ENCODE measurements at regions of chr1 and their contacts with region 1.

Region 1: GRCh38 chr1:183567584-183567983 is 22.7 kb downstream of the NCF2 start:
- DNase-seq: no peak
- H3K4me3 Mint-ChIP-seq: no peak overlapping the region
- H3K27ac Mint-ChIP-seq: no peak overlapping the region
- H3K4me1 Mint-ChIP-seq: peaks cover 13% of the 10 kb centered on the region
- H3K27me3 Mint-ChIP-seq: no peaks in the 10 kb centered on the region

Region 2: DNA sequence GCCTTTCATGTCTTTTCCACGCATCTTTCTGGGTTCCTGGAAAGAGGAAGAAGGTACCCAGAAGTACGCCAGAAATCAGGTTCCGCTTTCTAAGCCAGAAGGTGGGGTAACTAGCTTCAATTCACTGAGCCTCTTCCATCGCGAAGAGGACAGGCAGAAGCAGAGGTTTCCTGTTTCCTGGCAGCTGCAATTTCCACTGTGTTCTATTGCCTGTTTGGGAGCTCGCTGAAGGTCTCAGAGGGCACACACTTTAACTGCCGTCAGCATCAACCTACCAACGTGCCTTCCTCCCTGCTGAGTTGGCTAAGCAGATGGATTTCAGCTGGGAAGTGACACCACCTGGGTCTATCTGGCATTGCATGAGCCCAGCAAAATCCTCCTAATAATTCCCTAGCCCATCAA is 12.7 kb after region 1 on chr1:
- CTCF ChIA-PET with region 1: interaction called, 19 read pairs
- POLR2A ChIA-PET with region 1: interaction called, 3 read pairs
- DNase-seq: peak; percentile 33
- H3K4me3 Mint-ChIP-seq: peak overlapping the region; percentile 19
- H3K27ac Mint-ChIP-seq: peak overlapping the region; percentile 84
- H3K4me1 Mint-ChIP-seq: peaks cover 56% of the 10 kb centered on the region
- H3K27me3 Mint-ChIP-seq: no peaks in the 10 kb centered on the region

Region 3: GRCh38 chr1:183593356-183593755 is 25.8 kb after region 1 on chr1:
- CTCF ChIA-PET with region 1: no interaction called
- POLR2A ChIA-PET with region 1: no interaction called
- DNase-seq: no peak
- H3K4me3 Mint-ChIP-seq: no peak overlapping the region
- H3K27ac Mint-ChIP-seq: no peak overlapping the region
- H3K4me1 Mint-ChIP-seq: peaks cover 41% of the 10 kb centered on the region
- H3K27me3 Mint-ChIP-seq: peaks cover 8% of the 10 kb centered on the region

Region 4: GRCh38 chr1:183619781-183620180 is 52.2 kb after region 1 on chr1:
- CTCF ChIA-PET with region 1: no interaction called
- POLR2A ChIA-PET with region 1: no interaction called
- DNase-seq: no peak
- H3K4me3 Mint-ChIP-seq: no peak overlapping the region
- H3K27ac Mint-ChIP-seq: no peak overlapping the region
- H3K4me1 Mint-ChIP-seq: peaks cover 17% of the 10 kb centered on the region
- H3K27me3 Mint-ChIP-seq: no peaks in the 10 kb centered on the region

Measured in activated CD4-positive, alpha-beta T cell treated with anti-CD3 and anti-CD28 coated beads, Interleukin-2, amount 10 ng/mL, durations not matched to agents 7 days and 5 days (primary cell).